HCT116 (cell line): ENCODE measurements at regions of chr1 and their contacts with region 1.

Region 1: DNA sequence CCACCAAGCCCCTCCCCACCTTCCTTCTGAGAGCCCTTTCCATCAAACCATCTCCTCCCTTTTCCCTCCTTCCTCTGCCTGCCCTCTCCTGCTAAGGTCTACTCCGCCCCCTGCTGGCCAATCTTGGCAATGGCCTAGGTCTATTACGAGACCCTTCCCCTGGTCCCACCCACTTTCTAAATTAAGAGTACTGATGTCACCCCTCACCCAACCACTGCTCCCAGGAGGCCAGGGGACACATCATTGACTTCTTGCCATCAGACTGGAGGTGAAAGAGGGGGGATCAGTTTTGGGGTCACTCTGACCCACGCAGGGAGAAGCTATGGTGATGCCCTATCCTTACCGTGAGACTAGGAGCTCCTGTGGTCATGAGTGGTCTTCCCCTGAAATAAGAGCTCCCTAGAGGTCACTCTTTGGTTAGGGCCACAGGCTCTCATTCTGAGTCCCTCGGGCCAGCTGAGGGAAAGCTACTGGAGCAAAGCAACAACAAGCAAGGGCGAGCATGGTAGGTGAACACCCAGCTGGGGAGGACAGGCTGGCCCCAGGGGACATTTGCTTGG is 34.6 kb upstream of the S100A7 start:
- DNase-seq: peak; percentile 56
- ATAC-seq: peak; percentile 82
- H3K4me3 ChIP-seq: no peak overlapping the region
- H3K27ac ChIP-seq: no peak overlapping the region
- H3K4me1 ChIP-seq: peaks cover 3 to 20% of the 10 kb centered on the region in 2 experiments; a peak in 3 of 4 replicates
- H3K27me3 ChIP-seq: 0 out of 2 replicates have a peak, but pooled peaks cover 3% of the 10 kb centered on the region
- CTCF ChIP-seq: peak; percentile 82 to 97 (median 92)
- POLR2A ChIP-seq: no peak
- RAD21 ChIP-seq: peak; percentile 95

Region 2: GRCh38 chr1:153404768-153405167 is 90.3 kb before region 1 on chr1:
- CTCF ChIA-PET with region 1: interaction called, 5 read pairs
- POLR2A ChIA-PET with region 1: no interaction called
- RAD21 ChIA-PET with region 1: no interaction called
- intact Hi-C with region 1: loop called (anchors 5 kb)
- DNase-seq: peak; percentile 39
- ATAC-seq: peak; percentile 87
- H3K4me3 ChIP-seq: no peak overlapping the region
- H3K27ac ChIP-seq: no peak overlapping the region
- H3K4me1 ChIP-seq: no peaks in the 10 kb centered on the region
- H3K27me3 ChIP-seq: peaks cover 59% of the 10 kb centered on the region
- CTCF ChIP-seq: peak; percentile 62 to 78 (median 68); a peak in 5 of 6 replicates
- POLR2A ChIP-seq: no peak
- RAD21 ChIP-seq: no peak; the same call in 1 of the 2 replicates

Region 3: DNA sequence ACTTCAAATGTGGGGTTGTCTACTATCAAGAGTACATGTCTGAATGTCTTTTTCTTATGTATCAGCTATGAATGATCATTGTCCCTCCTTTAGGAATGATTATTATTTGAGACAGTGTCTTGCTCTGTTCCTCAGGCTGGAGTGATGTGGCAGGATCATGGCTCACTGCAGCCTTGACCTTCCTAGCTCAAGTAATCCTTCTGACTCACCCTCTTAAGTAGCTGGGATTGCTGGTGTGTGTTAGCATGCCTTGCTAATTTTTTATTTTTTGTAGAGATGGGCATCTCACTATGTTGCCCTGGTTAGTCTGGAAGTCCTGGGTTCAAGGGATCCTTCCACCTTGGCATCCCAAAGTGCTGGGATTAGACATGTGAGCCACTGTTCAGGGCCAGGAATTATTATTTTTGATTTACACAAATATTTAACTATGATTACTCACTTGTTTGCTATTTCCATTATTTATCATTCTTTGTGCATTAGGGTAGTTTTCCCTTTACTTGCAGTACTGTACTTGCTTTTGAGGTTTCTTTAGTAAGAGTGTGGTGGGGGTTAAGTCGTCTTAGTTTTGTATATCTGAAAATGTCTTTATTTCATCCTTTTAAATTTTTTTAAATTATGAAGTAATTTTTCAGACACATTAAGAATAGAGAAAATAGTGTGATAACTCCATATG is 47.4 kb before region 1 on chr1:
- CTCF ChIA-PET with region 1: no interaction called
- POLR2A ChIA-PET with region 1: no interaction called
- RAD21 ChIA-PET with region 1: no interaction called
- intact Hi-C with region 1: no loop called
- DNase-seq: no peak
- ATAC-seq: no peak; the same call in 1 of the 2 replicates
- H3K4me3 ChIP-seq: no peak overlapping the region
- H3K27ac ChIP-seq: no peak overlapping the region
- H3K4me1 ChIP-seq: peaks cover 0 to 7% of the 10 kb centered on the region in 2 experiments; a peak in 1 of 4 replicates
- H3K27me3 ChIP-seq: peaks cover 65% of the 10 kb centered on the region
- CTCF ChIP-seq: no peak
- POLR2A ChIP-seq: no peak
- RAD21 ChIP-seq: no peak

Region 4: DNA sequence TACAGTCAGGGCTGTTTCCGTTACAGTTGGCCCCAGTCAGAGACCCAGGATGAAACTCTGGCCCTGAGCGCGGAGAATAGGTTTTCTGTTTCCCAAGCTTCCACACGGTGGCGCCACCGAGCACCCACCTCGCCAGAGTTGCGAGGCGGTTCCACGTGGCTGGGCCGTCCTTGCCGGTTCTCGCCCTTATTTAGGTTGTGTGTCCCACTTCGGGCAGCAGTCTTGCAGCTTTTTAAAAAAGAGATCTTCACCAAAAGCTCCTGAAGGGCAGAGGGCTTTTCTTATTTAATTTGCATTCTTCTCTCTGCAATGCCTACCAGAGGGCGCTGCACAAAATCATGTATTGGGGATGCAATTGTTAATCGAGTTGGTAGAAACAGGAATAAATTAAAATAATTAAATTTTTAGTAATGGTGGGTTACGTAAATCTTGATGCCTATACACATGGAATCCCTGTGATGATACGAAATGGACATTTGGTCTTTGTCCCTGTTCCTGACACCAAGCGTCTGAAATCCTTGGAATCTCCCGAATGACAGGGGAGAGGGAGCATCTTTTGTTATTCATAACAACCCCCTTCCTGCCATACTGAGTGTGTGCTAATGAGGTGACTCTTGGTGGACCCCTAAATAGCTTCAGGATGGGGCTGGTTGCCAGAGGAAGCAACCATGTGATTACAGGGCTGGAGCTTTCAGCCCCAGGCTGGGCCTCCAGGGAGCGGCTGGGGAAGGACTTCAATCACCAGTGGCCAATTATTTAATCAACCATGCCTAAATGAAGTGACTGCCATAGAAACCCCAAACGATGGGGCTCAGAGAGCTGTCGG is 29.0 kb before region 1 on chr1:
- CTCF ChIA-PET with region 1: interaction called, 5 read pairs
- POLR2A ChIA-PET with region 1: no interaction called
- RAD21 ChIA-PET with region 1: no interaction called
- intact Hi-C with region 1: loop called (anchors 1 kb)
- DNase-seq: peak; percentile 32
- ATAC-seq: peak; percentile 95
- H3K4me3 ChIP-seq: no peak overlapping the region
- H3K27ac ChIP-seq: no peak overlapping the region
- H3K4me1 ChIP-seq: peaks cover 0 to 3% of the 10 kb centered on the region in 2 experiments; a peak in 1 of 4 replicates
- H3K27me3 ChIP-seq: peaks cover 29% of the 10 kb centered on the region
- CTCF ChIP-seq: peak; percentile 75 to 97 (median 91)
- POLR2A ChIP-seq: no peak
- RAD21 ChIP-seq: peak; percentile 67